Heart left ventricle (tissue), 16 donors: ENCODE measurements at regions of chr3 and their contacts with region 1.

Region 1: GRCh38 chr3:33787328-33788009 is 11.0 kb upstream of the PDCD6IP start:
- DNase-seq: peak in 4 of 5 donors; percentile 37 to 47 (median 46)
- ATAC-seq: peak; percentile 73 to 94 (median 91)
- H3K4me3 ChIP-seq: peak overlapping the region in 8 of 12 donors; percentile 23 to 44 (median 37)
- H3K27ac ChIP-seq: no peak overlapping the region
- H3K4me1 ChIP-seq: peaks cover 0 to 6% (median 0%) of the 10 kb centered on the region in 12 donors
- H3K27me3 ChIP-seq: no peaks in the 10 kb centered on the region
- CTCF ChIP-seq: peak; percentile 60 to 85 (median 80)
- POLR2A ChIP-seq: no peak

Region 2: GRCh38 chr3:33636125-33636850 is 151.2 kb before region 1 on chr3:
- intact Hi-C with region 1: loop called (anchors 1 to 5 kb)
- DNase-seq: no peak
- ATAC-seq: no peak
- H3K4me3 ChIP-seq: no peak overlapping the region
- H3K27ac ChIP-seq: no peak overlapping the region
- H3K4me1 ChIP-seq: peaks cover 0 to 6% (median 0%) of the 10 kb centered on the region in 12 donors
- H3K27me3 ChIP-seq: no peaks in the 10 kb centered on the region
- CTCF ChIP-seq: peak; percentile 38 to 78 (median 66)
- POLR2A ChIP-seq: no peak

Region 3: DNA sequence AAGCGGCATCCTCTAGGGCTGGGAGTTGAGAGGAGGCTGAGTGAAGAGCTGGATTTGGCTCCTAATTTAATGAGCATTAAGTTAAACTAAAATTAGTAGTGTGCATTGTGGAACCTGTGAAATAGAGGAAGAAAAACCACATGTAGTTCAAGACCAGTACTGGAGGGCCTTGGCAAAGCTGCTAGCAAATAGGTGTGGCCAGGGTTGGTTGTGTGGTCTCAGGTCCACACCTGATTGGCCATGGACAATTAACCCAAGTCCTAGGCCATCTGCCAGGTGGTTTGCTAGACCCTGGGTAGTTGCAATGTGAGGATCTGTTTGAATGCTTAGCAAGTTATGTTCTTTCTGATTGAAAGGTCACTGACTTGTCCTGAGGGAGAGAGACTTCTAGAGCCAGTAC is 286.5 kb after region 1 on chr3:
- intact Hi-C with region 1: no loop called
- DNase-seq: no peak
- ATAC-seq: no peak
- H3K4me3 ChIP-seq: no peak overlapping the region
- H3K27ac ChIP-seq: no peak overlapping the region
- H3K4me1 ChIP-seq: no peaks in the 10 kb centered on the region
- H3K27me3 ChIP-seq: no peaks in the 10 kb centered on the region
- CTCF ChIP-seq: no peak
- POLR2A ChIP-seq: no peak